ENCODE measurements at regions of chr3 and their contacts with region 1.

Region 1: GRCh38 chr3:185114756-185115155 is 38.1 kb downstream of the C3orf70 start:
- DNase-seq: no peak
- H3K4me3 Mint-ChIP-seq: no peak overlapping the region
- H3K27ac Mint-ChIP-seq: no peak overlapping the region
- H3K4me1 Mint-ChIP-seq: no peaks in the 10 kb centered on the region
- H3K27me3 Mint-ChIP-seq: peaks cover 64% of the 10 kb centered on the region
- CTCF ChIP-seq: no peak

Region 2: GRCh38 chr3:185264849-185265553 is 150.2 kb after region 1 on chr3:
- CTCF ChIA-PET with region 1: interaction called, 10 read pairs
- intact Hi-C with region 1: no loop called
- DNase-seq: no peak
- H3K4me3 Mint-ChIP-seq: no peak overlapping the region
- H3K27ac Mint-ChIP-seq: no peak overlapping the region
- H3K4me1 Mint-ChIP-seq: peaks cover 10% of the 10 kb centered on the region
- H3K27me3 Mint-ChIP-seq: peaks cover under 1% of the 10 kb centered on the region
- CTCF ChIP-seq: no peak

Region 3: DNA sequence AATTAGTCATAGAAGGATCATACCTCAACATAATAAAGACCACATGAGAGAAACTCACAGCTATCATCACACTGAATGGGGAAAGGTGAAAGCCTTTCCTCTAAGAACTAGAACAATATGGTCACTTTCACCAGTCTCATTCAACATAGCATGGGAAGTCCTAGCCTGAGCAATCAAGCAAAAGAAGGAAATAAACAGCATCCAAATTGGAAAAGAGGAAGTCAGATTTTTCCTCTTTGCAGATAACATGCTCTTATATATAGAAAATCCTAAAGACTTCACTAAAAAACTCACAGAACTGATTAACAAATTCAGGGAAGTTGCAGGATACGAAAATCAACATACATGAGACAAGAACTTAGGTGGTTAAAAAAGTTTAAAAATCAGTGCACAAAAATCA is 272.9 kb after region 1 on chr3:
- CTCF ChIA-PET with region 1: no interaction called
- intact Hi-C with region 1: no loop called
- DNase-seq: no peak
- H3K4me3 Mint-ChIP-seq: no peak overlapping the region
- H3K27ac Mint-ChIP-seq: no peak overlapping the region
- H3K4me1 Mint-ChIP-seq: peaks cover 9% of the 10 kb centered on the region
- H3K27me3 Mint-ChIP-seq: no peaks in the 10 kb centered on the region
- CTCF ChIP-seq: no peak